ENCODE measurements at regions of chr20 and their contacts with region 1.

Region 1: DNA sequence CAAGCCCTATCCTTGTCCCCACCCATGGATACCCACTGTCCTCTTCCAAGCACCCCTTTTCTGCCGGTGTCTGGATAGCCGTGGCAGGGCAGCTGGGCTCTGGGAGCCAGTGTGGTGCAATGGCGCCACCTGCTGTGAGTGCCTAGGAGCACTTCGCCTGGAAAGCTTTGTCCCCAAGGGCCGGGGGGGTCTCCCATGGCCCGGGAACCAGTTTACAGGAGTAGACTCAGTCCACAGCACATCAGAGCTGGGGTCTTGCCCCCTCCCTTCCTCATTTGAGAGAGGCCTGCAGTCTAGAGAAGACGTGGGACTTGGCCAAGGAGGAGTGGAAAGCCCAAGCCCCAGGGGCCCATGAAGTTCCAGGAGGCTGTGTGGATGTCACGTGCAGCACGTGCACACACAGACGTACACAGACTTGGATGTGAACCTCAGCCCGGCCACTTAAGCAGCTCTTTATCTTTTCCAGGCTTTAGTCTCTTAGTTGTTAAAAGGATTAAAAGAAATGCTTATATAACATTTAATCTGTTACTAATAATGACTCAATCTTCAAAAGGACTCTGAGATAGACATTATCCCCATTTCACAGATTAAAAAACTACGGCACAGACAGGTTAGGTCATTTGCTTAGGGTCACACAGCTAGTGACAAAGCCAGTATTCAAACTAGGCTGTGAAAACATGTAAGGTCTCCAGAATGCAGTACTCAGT is 40.9 kb upstream of the CDH22 start:
- DNase-seq: peak; percentile 66
- ATAC-seq: peak; percentile 56
- H3K4me3 Mint-ChIP-seq: no peak overlapping the region
- H3K27ac Mint-ChIP-seq: peak overlapping the region; percentile 42
- H3K4me1 Mint-ChIP-seq: peaks cover 14% of the 10 kb centered on the region
- H3K27me3 Mint-ChIP-seq: peaks cover 3% of the 10 kb centered on the region

Region 2: GRCh38 chr20:46324960-46325703 is 24.1 kb before region 1 on chr20:
- CTCF ChIA-PET with region 1: interaction called, 11 read pairs
- DNase-seq: no peak
- ATAC-seq: peak; percentile 45
- H3K4me3 Mint-ChIP-seq: no peak overlapping the region
- H3K27ac Mint-ChIP-seq: no peak overlapping the region
- H3K4me1 Mint-ChIP-seq: no peaks in the 10 kb centered on the region
- H3K27me3 Mint-ChIP-seq: peaks cover 28% of the 10 kb centered on the region

Region 3: DNA sequence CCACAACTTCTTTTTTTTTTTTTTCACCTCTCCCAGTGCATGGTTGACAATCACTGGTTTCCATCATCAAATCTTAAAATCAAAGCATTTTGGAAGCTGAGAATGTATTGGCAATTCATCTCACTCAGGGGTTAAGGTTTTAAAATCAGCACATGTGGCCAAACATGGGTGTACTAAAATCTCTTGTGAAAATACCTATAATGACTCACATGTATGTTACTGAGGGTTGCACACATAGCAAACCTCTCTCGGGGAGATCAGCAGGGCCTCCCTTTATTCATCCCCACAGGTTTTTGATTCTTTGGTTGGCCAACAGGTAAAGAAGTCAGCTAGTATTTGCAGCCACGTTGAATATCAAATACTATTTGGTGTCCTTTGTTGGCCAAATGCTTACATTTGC is 245.5 kb after region 1 on chr20:
- CTCF ChIA-PET with region 1: no interaction called
- DNase-seq: no peak
- ATAC-seq: no peak
- H3K4me3 Mint-ChIP-seq: no peak overlapping the region
- H3K27ac Mint-ChIP-seq: no peak overlapping the region
- H3K4me1 Mint-ChIP-seq: peaks cover 7% of the 10 kb centered on the region
- H3K27me3 Mint-ChIP-seq: peaks cover 38% of the 10 kb centered on the region